Activated T-helper 2 cell treated with anti-CD3 and anti-CD28 coated beads, Interferon-gamma antibody, Interleukin-2, Interleukin-4, amounts not matched to agents 10 μg/mL and 5 μg/mL and 100 μg/mL, durations not matched to agents 14 hours and 24 hours and 36 hours (primary cell): ENCODE measurements at regions of chr6 and their contacts with region 1.

Region 1: GRCh38 chr6:158819213-158819909 is at the start of gene EZR:
- DNase-seq: peak; percentile 71
- H3K4me3 Mint-ChIP-seq: peak within 1 kb of the TSS; percentile 99
- H3K27ac Mint-ChIP-seq: peak within 1 kb of the TSS; percentile 89
- H3K4me1 Mint-ChIP-seq: peaks cover 42% of the 10 kb centered on the region
- H3K27me3 Mint-ChIP-seq: no peaks in the 10 kb centered on the region
- total RNA-seq, gene EZR: 204 and 206 TPM in 2 replicates

Region 2: GRCh38 chr6:158803733-158804143 is 15.6 kb before region 1 on chr6:
- intact Hi-C with region 1: loop called (anchors 2 kb)
- DNase-seq: peak; percentile 41
- H3K4me3 Mint-ChIP-seq: peak overlapping the region; percentile 48
- H3K27ac Mint-ChIP-seq: peak overlapping the region; percentile 65
- H3K4me1 Mint-ChIP-seq: peaks cover 75% of the 10 kb centered on the region
- H3K27me3 Mint-ChIP-seq: no peaks in the 10 kb centered on the region

Region 3: GRCh38 chr6:158869826-158870648 is 50.7 kb after region 1 on chr6:
- intact Hi-C with region 1: loop called (anchors 1 kb)
- DNase-seq: peak; percentile 94
- H3K4me3 Mint-ChIP-seq: peak overlapping the region; percentile 83
- H3K27ac Mint-ChIP-seq: peak overlapping the region; percentile 98
- H3K4me1 Mint-ChIP-seq: peaks cover 32% of the 10 kb centered on the region
- H3K27me3 Mint-ChIP-seq: peaks cover 4% of the 10 kb centered on the region

Region 4: GRCh38 chr6:159104163-159104925 is 285.0 kb after region 1 on chr6:
- intact Hi-C with region 1: loop called (anchors 10 kb)
- DNase-seq: peak; percentile 69
- H3K4me3 Mint-ChIP-seq: peak overlapping the region; percentile 11
- H3K27ac Mint-ChIP-seq: peak overlapping the region; percentile 79
- H3K4me1 Mint-ChIP-seq: peaks cover 75% of the 10 kb centered on the region
- H3K27me3 Mint-ChIP-seq: no peaks in the 10 kb centered on the region